ENCODE measurements at regions of chr5 and their contacts with region 1.

Region 1: GRCh38 chr5:112907166-112907631 is 14.8 kb downstream of the REEP5 start:
- DNase-seq: no peak
- H3K4me3 ChIP-seq: no peak overlapping the region
- H3K27ac ChIP-seq: no peak overlapping the region
- H3K4me1 ChIP-seq: no peaks in the 10 kb centered on the region
- CTCF ChIP-seq: no peak

Region 2: DNA sequence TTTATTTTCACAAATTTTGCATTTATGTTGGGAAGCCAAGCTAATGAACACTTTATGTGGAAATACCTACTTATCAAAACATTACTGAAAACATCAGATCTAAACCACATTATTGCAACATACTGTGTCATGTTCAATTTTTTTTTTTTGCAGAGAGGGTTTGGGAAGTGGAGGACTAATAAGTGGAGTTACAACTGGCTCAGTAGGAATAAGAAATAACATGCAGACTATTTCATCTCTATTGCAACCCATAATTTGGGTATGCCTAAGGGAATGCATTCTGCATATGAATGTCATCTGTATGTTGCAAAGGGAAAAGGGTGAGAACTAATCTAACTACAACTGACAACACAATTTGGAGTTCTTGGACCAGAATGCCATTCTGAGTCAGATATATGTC is 127.7 kb before region 1 on chr5:
- CTCF ChIA-PET with region 1: no interaction called
- POLR2A ChIA-PET with region 1: no interaction called
- intact Hi-C with region 1: no loop called
- DNase-seq: no peak
- H3K4me3 ChIP-seq: no peak overlapping the region
- H3K27ac ChIP-seq: no peak overlapping the region
- H3K4me1 ChIP-seq: no peaks in the 10 kb centered on the region
- CTCF ChIP-seq: no peak

Region 3: DNA sequence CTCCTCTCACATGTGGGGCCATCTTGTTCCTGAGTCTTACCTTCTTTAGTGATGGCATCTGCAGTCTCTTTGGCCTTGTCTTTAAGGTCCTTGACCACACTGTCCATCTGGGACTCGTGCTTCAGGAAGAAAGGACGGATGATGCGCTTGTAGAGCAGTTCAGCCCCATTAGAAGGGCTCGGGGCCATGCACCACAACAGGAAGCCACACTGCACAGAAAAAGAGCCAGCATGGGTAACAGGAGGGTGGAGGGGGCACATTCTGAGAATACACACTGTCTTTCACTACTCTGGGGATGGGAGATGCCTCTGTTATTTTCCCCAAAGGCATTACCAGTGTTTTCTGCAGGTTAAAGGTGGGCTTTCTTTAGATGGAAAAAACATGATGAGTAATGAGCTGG is 20.2 kb before region 1 on chr5:
- CTCF ChIA-PET with region 1: no interaction called
- POLR2A ChIA-PET with region 1: interaction called, 18 read pairs
- intact Hi-C with region 1: no loop called
- DNase-seq: no peak
- H3K4me3 ChIP-seq: no peak overlapping the region
- H3K27ac ChIP-seq: no peak overlapping the region
- H3K4me1 ChIP-seq: no peaks in the 10 kb centered on the region
- CTCF ChIP-seq: no peak